ENCODE measurements at regions of chr11 and their contacts with region 1.

Region 1: DNA sequence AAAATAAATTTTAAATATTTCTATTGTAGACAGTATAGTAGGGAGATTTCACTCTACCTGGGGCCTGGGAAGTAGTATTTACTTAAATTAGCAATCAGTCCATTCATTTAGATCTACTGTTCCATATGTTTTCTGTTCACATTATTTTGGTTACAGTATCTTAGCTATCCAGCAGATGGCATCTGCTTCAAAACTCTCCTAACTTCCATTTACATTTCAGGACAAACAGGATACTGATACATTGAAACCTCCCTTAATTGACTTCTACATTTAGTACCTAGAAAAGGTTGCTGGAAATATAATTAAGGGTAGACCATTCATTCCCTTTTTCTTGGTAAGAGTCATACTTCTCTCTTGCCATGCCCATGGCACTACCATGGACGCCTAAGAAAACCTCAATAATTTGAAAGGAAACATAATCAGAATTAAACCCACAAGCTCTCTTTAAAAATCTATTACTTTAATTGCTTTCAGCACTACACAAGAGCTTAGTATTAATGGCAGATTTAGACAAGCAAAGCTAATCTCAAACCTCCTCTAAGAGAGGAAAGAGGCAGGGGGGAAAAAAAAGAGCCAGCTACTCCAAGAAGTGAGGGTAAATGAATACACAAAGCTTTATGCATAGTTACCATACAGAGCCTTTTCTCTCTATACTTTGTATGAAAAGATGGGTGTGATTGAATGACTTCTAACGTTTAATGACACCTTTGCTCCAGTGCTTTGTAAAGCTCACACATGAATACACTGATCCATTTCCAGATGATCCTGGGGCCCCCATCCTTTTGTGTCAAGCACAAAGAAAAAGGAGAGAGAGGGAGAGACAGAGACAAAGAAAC is 131.2 kb upstream of the MTMR2 start:
- DNase-seq: no peak
- ATAC-seq: peak in 2 of 4 donors; percentile 63 to 79
- H3K4me3 ChIP-seq: no peak overlapping the region
- H3K27ac ChIP-seq: peak overlapping the region in 1 of 12 donors; percentile 11
- H3K4me1 ChIP-seq: peaks cover 0 to 62% (median 5%) of the 10 kb centered on the region in 12 donors
- H3K27me3 ChIP-seq: no peaks in the 10 kb centered on the region
- CTCF ChIP-seq: peak; percentile 43 to 79 (median 66)
- POLR2A ChIP-seq: no peak

Region 2: GRCh38 chr11:96154802-96155520 is 99.9 kb after region 1 on chr11:
- intact Hi-C with region 1: loop called in 1 of 10 experiments (anchors 5 kb)
- DNase-seq: no peak
- ATAC-seq: no peak
- H3K4me3 ChIP-seq: no peak overlapping the region
- H3K27ac ChIP-seq: peak overlapping the region; percentile 31 to 89 (median 80)
- H3K4me1 ChIP-seq: peaks cover 0 to 49% (median 39%) of the 10 kb centered on the region in 12 donors
- H3K27me3 ChIP-seq: no peaks in the 10 kb centered on the region
- CTCF ChIP-seq: no peak
- POLR2A ChIP-seq: no peak

Region 3: DNA sequence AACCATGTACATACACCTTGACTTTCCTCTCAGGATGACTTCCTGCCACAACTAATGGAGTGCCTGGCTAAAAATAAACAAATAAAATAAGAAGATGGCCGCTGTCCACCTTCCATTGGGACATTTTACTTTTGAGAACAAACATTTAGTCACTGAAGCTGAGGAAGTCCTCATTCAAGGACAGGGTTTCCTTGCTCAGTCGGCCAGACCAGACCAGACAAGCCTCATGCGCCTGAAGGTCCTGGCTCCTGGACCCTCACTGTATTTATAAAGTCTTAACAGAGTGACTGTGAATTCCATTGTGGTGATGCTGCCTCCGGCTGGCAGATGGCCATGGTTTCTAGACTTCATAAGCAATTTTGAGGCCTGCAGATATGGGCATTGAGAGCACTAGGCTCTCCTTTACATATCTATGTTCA is 173.4 kb after region 1 on chr11:
- intact Hi-C with region 1: loop called in 1 of 10 experiments (anchors 10 kb)
- DNase-seq: peak; percentile 71 to 81 (median 78)
- ATAC-seq: peak; percentile 71 to 90 (median 74)
- H3K4me3 ChIP-seq: no peak overlapping the region
- H3K27ac ChIP-seq: peak overlapping the region; percentile 34 to 87 (median 64)
- H3K4me1 ChIP-seq: peaks cover 0 to 66% (median 27%) of the 10 kb centered on the region in 12 donors
- H3K27me3 ChIP-seq: no peaks in the 10 kb centered on the region
- CTCF ChIP-seq: no peak
- POLR2A ChIP-seq: no peak

Region 4: GRCh38 chr11:96389720-96390487 is 334.8 kb after region 1 on chr11 and contains the starts of genes CCDC82 and JRKL:
- intact Hi-C with region 1: loop called in 1 of 10 experiments (anchors 5 kb)
- DNase-seq: peak; percentile 96 to 98 (median 97)
- ATAC-seq: peak; percentile 99 to 100 (median 100)
- H3K4me3 ChIP-seq: peak within 1 kb of the TSS; percentile 71 to 94 (median 84)
- H3K27ac ChIP-seq: peak within 1 kb of the TSS; percentile 54 to 92 (median 87)
- H3K4me1 ChIP-seq: peaks cover 0 to 32% (median 20%) of the 10 kb centered on the region in 12 donors
- H3K27me3 ChIP-seq: no peaks in the 10 kb centered on the region
- CTCF ChIP-seq: peak in 1 of 12 donors; percentile 3
- POLR2A ChIP-seq: peak; percentile 5 to 83
- total RNA-seq, gene CCDC82: 5.4 to 16.4 (median 14.5) TPM
- total RNA-seq, gene JRKL: 2.6 to 8.3 (median 5.5) TPM

Measured in heart left ventricle (tissue), 16 donors.